Right lobe of liver (tissue), 6 donors: ENCODE measurements at regions of chr22 and their contacts with region 1.

Region 1: GRCh38 chr22:36123673-36124630 is 36.6 kb downstream of the APOL3 start:
- DNase-seq: peak; percentile 95 to 96 (median 96)
- ATAC-seq: peak; percentile 98 to 99 (median 98)
- H3K4me3 ChIP-seq: peak overlapping the region in 2 of 3 donors; percentile 28 to 36
- H3K27ac ChIP-seq: peak overlapping the region; percentile 63 to 79 (median 78)
- H3K4me1 ChIP-seq: no peaks in the 10 kb centered on the region
- H3K27me3 ChIP-seq: no peaks in the 10 kb centered on the region
- CTCF ChIP-seq: peak; percentile 95 to 99 (median 97)
- POLR2A ChIP-seq: peak; percentile 54

Region 2: DNA sequence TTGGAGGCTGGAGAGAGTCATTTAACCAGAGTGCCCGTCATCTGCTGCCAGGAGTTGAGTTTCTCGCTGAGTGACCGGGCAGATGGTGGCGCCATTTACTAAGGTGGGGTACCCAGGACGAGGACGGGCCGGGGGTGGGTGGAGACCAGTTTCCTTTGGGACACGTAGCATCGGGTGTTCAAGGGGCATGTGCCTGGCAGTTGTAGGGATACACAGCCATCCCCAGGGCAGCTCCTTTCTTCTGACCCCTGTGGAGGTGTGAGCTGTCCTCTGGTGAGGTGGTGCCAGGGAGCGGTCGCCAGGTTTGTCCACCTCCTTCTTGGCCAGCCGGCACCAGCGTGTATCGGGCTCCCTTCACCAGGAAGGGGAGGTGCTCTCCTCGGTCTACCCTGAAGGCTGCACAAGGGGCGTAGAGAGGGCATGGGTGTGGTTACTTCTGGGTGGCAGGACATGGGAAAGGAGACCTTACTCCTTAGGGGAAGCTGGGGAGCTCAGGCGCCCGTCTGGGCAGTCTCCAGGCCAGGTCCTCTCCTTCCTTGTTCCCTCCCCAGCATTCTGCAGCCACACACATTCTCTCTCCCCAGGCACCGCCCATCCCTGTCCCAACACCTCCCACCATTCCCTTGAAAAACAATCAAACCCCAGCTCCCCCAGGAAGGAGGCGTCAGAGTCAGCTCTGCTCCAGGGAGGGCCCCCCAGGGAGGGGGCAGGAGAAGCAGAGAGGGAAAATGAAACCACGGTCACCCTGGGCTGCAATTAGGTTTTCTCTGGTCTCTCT is 496.5 kb before region 1 on chr22:
- intact Hi-C with region 1: loop called in 1 of 2 experiments (anchors 5 kb)
- DNase-seq: peak; percentile 84 to 90 (median 86)
- ATAC-seq: peak; percentile 78 to 84 (median 82)
- H3K4me3 ChIP-seq: peak overlapping the region; percentile 59 to 71 (median 69)
- H3K27ac ChIP-seq: peak overlapping the region; percentile 76 to 80 (median 78)
- H3K4me1 ChIP-seq: peaks cover 0 to 11% (median 0%) of the 10 kb centered on the region in 4 donors
- H3K27me3 ChIP-seq: no peaks in the 10 kb centered on the region
- CTCF ChIP-seq: peak; percentile 45 to 58 (median 54)
- POLR2A ChIP-seq: peak; percentile 61

Region 3: GRCh38 chr22:35638410-35638809 is 485.5 kb before region 1 on chr22:
- intact Hi-C with region 1: loop called in 1 of 2 experiments (anchors 5 kb)
- DNase-seq: peak in 2 of 3 donors; percentile 55 to 81
- ATAC-seq: peak; percentile 57 to 70 (median 62)
- H3K4me3 ChIP-seq: no peak overlapping the region
- H3K27ac ChIP-seq: peak overlapping the region in 2 of 3 donors; percentile 40
- H3K4me1 ChIP-seq: peaks cover 0 to 21% (median 7%) of the 10 kb centered on the region in 4 donors
- H3K27me3 ChIP-seq: no peaks in the 10 kb centered on the region
- CTCF ChIP-seq: no peak
- POLR2A ChIP-seq: no peak

Region 4: DNA sequence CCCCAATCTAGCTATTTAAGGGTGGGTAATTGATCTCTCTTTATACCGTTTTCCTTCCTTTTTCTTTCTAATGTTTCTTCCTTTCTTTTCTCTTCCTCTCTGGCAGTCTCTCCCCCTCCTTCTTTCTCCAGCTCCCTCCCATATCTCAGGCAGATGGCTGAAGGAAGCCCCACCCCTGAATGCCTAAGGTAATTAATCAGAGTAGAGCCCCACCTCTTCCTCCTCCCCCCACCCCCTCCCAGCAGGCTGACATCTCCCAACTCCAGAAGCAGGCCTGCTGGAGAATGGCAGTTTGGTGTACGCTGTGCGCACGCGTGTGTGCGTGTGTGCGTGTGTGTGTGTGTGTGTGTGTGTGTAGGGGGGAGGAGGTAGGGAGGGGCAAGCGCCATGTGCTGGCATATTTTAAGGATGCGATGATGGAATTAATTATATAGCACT is 283.6 kb before region 1 on chr22:
- intact Hi-C with region 1: no loop called
- DNase-seq: peak; percentile 42 to 64 (median 63)
- ATAC-seq: peak; percentile 48 to 72 (median 52)
- H3K4me3 ChIP-seq: peak overlapping the region in 1 of 3 donors; percentile 10
- H3K27ac ChIP-seq: peak overlapping the region in 1 of 3 donors; percentile 25
- H3K4me1 ChIP-seq: peaks cover 0 to 18% (median 5%) of the 10 kb centered on the region in 4 donors
- H3K27me3 ChIP-seq: no peaks in the 10 kb centered on the region
- CTCF ChIP-seq: no peak
- POLR2A ChIP-seq: no peak

Region 5: GRCh38 chr22:35930933-35931332 is 193.0 kb before region 1 on chr22:
- intact Hi-C with region 1: loop called in 1 of 2 experiments (anchors 10 kb)
- DNase-seq: no peak
- ATAC-seq: peak; percentile 94 to 99 (median 98)
- H3K4me3 ChIP-seq: no peak overlapping the region
- H3K27ac ChIP-seq: no peak overlapping the region
- H3K4me1 ChIP-seq: peaks cover 0 to 14% (median 0%) of the 10 kb centered on the region in 4 donors
- H3K27me3 ChIP-seq: no peaks in the 10 kb centered on the region
- CTCF ChIP-seq: peak; percentile 68 to 89 (median 70)
- POLR2A ChIP-seq: no peak

Region 6: DNA sequence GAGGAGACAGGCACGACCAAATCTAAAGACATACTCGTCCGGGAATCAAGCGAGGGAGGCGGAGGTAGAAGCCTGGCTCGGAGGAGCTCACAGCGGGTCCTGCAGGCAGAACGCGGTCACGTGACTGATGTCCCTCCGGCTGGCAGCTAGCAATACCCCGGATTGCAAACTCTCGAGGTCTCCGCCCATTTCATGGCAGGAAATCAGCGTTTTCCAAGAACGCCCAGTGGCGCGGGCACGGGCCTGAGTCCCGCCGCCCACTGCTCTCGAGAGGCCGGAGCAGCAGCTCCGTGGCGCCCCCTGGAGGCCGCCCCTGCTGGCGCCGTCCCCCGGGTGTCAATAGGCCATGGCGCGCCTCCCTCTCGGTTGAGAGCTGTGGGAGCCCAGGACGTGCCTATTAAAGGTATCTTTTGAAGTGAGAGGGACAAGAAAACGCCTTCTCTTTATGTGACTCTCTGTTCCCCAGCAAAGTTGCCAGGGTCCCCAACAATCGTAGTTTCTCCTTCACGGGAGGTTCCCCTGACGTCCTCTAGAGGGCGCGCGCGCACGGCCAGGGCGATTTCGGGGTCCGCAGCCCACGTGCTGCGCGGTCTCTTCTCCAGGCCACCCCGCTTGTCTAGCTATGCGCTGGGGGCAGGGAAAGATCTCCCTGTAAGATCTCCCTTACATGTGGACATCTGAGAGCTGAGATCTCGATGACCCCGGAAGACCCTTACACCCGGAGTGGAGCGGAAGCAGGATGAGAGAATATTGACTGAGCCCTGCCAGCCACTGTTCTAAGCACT is 58.0 kb before region 1 on chr22:
- intact Hi-C with region 1: loop called in 1 of 2 experiments (anchors 10 kb)
- DNase-seq: peak; percentile 92 to 97 (median 95)
- ATAC-seq: peak; percentile 93 to 97 (median 96)
- H3K4me3 ChIP-seq: peak overlapping the region; percentile 50 to 59 (median 58)
- H3K27ac ChIP-seq: peak overlapping the region; percentile 86 to 90 (median 88)
- H3K4me1 ChIP-seq: peaks cover 0 to 7% (median 0%) of the 10 kb centered on the region in 4 donors
- H3K27me3 ChIP-seq: no peaks in the 10 kb centered on the region
- CTCF ChIP-seq: peak; percentile 99 to 100 (median 100)
- POLR2A ChIP-seq: peak; percentile 76

Region 7: GRCh38 chr22:36211237-36211861 is 87.4 kb after region 1 on chr22:
- intact Hi-C with region 1: no loop called
- DNase-seq: no peak
- ATAC-seq: peak; percentile 42 to 62 (median 55)
- H3K4me3 ChIP-seq: no peak overlapping the region
- H3K27ac ChIP-seq: no peak overlapping the region
- H3K4me1 ChIP-seq: peaks cover 0 to 17% (median 2%) of the 10 kb centered on the region in 4 donors
- H3K27me3 ChIP-seq: no peaks in the 10 kb centered on the region
- CTCF ChIP-seq: no peak
- POLR2A ChIP-seq: no peak

Region 8: GRCh38 chr22:36301384-36301828 is 177.5 kb after region 1 on chr22:
- intact Hi-C with region 1: no loop called
- DNase-seq: peak; percentile 72 to 79 (median 75)
- ATAC-seq: peak; percentile 55 to 79 (median 70)
- H3K4me3 ChIP-seq: no peak overlapping the region
- H3K27ac ChIP-seq: peak overlapping the region in 1 of 3 donors; percentile 5
- H3K4me1 ChIP-seq: peaks cover 0 to 20% (median 6%) of the 10 kb centered on the region in 4 donors
- H3K27me3 ChIP-seq: no peaks in the 10 kb centered on the region
- CTCF ChIP-seq: peak; percentile 89 to 98 (median 94)
- POLR2A ChIP-seq: no peak